ENCODE measurements at regions of chr3 and their contacts with region 1.

Region 1: DNA sequence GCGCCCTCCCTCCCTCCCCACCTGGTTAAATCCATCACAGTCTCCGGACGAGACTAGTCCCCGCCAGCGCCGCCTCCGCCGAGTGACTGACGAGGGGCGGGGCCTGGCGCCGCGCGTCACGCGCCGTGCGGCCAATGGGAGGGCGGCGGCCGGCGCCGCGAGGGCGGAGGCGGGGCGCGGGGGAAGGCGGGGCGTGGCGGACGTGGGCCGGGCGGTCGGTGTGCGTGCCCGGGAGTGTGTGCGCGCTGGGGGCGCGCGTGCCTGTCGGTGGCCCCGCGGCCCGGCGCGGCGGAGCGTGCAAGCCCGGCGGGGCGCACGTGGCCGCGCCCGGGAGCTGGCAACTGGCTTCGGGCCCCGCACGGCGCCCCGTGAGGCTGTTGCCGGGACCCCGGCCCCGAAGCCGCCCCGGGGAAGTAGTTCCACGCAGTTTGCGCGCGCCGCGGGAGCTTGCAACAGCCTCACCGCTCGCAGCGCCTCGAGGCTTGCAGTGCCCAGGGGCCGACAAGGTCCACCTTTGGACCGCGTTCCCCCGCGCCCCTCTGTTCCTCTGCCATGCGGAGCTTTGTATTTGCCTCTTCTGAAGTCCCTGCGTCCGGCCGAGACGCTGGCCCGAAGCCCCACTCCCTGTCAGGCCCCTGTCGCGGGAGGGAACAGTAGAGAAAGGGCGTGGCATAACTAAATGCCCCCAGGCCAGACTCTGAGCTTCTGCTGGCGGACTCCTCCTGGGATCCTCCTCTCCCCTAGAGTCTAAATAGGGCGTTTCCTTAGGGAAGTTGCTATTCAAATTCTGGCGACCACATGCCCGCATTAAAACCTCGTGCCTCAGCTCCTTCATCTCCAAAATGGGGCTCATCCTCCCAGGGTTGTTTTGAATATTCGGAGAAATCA is 400.9 kb downstream of the SHQ1 start:
- DNase-seq: peak; percentile 86 to 98 (median 95)
- ATAC-seq: peak; percentile 99
- H3K4me3 ChIP-seq: peak overlapping the region; percentile 39
- H3K4me3 Mint-ChIP-seq: peak overlapping the region; percentile 47 to 98 (median 74)
- H3K27ac ChIP-seq: peak overlapping the region; percentile 79
- H3K27ac Mint-ChIP-seq: peak overlapping the region; percentile 25 to 83 (median 61)
- H3K4me1 ChIP-seq: peaks cover 23 to 31% of the 10 kb centered on the region in 2 donors
- H3K4me1 Mint-ChIP-seq: peaks cover 37 to 43% (median 41%) of the 10 kb centered on the region in 7 donors
- H3K27me3 ChIP-seq: no peaks in the 10 kb centered on the region
- H3K27me3 Mint-ChIP-seq: peaks cover 0 to 8% (median 6%) of the 10 kb centered on the region in 5 donors

Region 2: DNA sequence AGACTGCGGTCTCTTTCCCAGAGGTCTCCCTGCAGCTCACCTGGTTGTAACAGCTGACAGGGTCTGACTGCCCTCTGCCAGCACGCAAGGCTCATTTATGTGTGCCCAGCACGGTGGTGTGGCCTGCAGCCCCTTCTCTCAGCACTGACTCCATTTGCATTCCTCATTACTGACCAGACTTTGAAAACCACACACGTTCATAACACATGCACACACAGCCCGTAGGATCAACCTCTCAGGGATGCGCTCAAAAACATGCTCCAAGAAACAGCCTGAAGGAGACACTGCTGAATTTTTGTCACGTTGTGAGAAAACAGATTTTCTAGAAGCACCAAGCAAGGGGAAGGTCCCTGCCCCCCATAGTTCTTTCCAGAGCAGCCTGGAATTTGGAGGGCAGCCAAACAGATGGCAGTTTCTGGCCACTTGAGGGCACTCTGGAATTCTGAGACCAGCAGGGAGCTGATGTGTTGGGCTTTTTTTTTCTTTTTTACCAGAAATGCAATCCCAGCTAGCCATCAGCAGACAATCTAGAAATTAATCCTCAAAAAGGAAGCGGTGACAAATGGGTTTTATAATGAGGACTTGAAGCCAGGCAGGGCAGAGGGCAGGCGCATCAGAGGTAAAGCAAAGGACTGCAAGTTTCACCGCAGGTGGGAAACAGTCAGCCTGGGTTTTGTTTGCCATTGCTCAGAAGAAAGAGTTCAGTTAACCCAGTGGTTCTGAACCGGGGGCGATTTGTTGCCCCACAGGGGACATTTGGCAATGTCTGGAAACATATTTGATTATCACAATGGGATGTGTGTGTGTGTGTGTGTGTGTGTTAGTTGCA is 491.8 kb before region 1 on chr3:
- CTCF ChIA-PET with region 1: no interaction called
- POLR2A ChIA-PET with region 1: no interaction called
- intact Hi-C with region 1: loop called in 1 of 2 experiments (anchors 10 kb)
- DNase-seq: peak in 3 of 9 donors; percentile 5 to 27 (median 17)
- ATAC-seq: no peak
- H3K4me3 ChIP-seq: no peak overlapping the region
- H3K4me3 Mint-ChIP-seq: no peak overlapping the region
- H3K27ac ChIP-seq: no peak overlapping the region
- H3K27ac Mint-ChIP-seq: peak overlapping the region in 1 of 9 donors; percentile 28
- H3K4me1 ChIP-seq: no peaks in the 10 kb centered on the region
- H3K4me1 Mint-ChIP-seq: peaks cover 0 to 43% (median 13%) of the 10 kb centered on the region in 7 donors
- H3K27me3 ChIP-seq: no peaks in the 10 kb centered on the region
- H3K27me3 Mint-ChIP-seq: no peaks in the 10 kb centered on the region

Region 3: GRCh38 chr3:72339116-72340030 is 107.9 kb before region 1 on chr3:
- CTCF ChIA-PET with region 1: no interaction called
- POLR2A ChIA-PET with region 1: interaction called, 3 read pairs
- intact Hi-C with region 1: loop called in 1 of 2 experiments (anchors 2 kb)
- DNase-seq: no peak
- ATAC-seq: peak; percentile 76
- H3K4me3 ChIP-seq: no peak overlapping the region
- H3K4me3 Mint-ChIP-seq: no peak overlapping the region
- H3K27ac ChIP-seq: no peak overlapping the region
- H3K27ac Mint-ChIP-seq: no peak overlapping the region
- H3K4me1 ChIP-seq: peaks cover 0 to 16% of the 10 kb centered on the region in 2 donors
- H3K4me1 Mint-ChIP-seq: peaks cover 9 to 29% (median 25%) of the 10 kb centered on the region in 7 donors
- H3K27me3 ChIP-seq: no peaks in the 10 kb centered on the region
- H3K27me3 Mint-ChIP-seq: peaks cover 0 to 3% (median 0%) of the 10 kb centered on the region in 5 donors

Region 4: DNA sequence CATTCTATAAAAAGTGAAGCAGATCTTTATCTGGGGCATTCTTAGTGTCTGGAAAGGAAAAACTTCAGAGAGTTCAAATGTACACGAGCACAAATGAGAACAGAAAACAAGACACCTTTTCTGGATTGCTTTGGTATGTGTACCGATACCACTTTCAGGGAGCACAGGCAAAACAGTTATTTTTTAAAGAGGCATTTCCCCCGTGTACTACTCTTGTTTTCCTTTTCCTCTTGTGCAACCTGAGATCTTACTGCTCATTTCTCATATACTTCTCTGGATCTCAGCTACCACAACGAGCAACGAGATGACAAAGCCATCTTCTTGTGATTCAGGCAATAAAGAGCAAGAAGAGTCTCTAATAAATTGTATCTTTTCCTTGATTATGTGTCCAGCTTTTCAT is 62.7 kb before region 1 on chr3:
- CTCF ChIA-PET with region 1: no interaction called
- POLR2A ChIA-PET with region 1: no interaction called
- intact Hi-C with region 1: loop called (anchors 2 kb)
- DNase-seq: no peak
- ATAC-seq: no peak
- H3K4me3 ChIP-seq: no peak overlapping the region
- H3K4me3 Mint-ChIP-seq: peak overlapping the region in 5 of 10 donors; percentile 5 to 53 (median 38)
- H3K27ac ChIP-seq: no peak overlapping the region
- H3K27ac Mint-ChIP-seq: peak overlapping the region in 7 of 9 donors; percentile 18 to 76 (median 51)
- H3K4me1 ChIP-seq: peaks cover 0 to 30% of the 10 kb centered on the region in 2 donors
- H3K4me1 Mint-ChIP-seq: peaks cover 54 to 100% (median 77%) of the 10 kb centered on the region in 7 donors
- H3K27me3 ChIP-seq: no peaks in the 10 kb centered on the region
- H3K27me3 Mint-ChIP-seq: no peaks in the 10 kb centered on the region

Region 5: GRCh38 chr3:72482589-72483321 is 35.5 kb after region 1 on chr3:
- CTCF ChIA-PET with region 1: no interaction called
- POLR2A ChIA-PET with region 1: no interaction called
- intact Hi-C with region 1: loop called (anchors 2 to 5 kb)
- DNase-seq: peak in 7 of 9 donors; percentile 9 to 72 (median 21)
- ATAC-seq: peak; percentile 85
- H3K4me3 ChIP-seq: peak overlapping the region; percentile 48
- H3K4me3 Mint-ChIP-seq: peak overlapping the region; percentile 62 to 91 (median 83)
- H3K27ac ChIP-seq: peak overlapping the region; percentile 46
- H3K27ac Mint-ChIP-seq: peak overlapping the region; percentile 26 to 85 (median 77)
- H3K4me1 ChIP-seq: no peaks in the 10 kb centered on the region
- H3K4me1 Mint-ChIP-seq: peaks cover 6 to 44% (median 12%) of the 10 kb centered on the region in 7 donors
- H3K27me3 ChIP-seq: no peaks in the 10 kb centered on the region
- H3K27me3 Mint-ChIP-seq: no peaks in the 10 kb centered on the region

Region 6: GRCh38 chr3:72549761-72550581 is 102.7 kb after region 1 on chr3:
- CTCF ChIA-PET with region 1: no interaction called
- POLR2A ChIA-PET with region 1: no interaction called
- intact Hi-C with region 1: no loop called
- DNase-seq: peak in 8 of 9 donors; percentile 4 to 40 (median 28)
- ATAC-seq: peak; percentile 47
- H3K4me3 ChIP-seq: peak overlapping the region; percentile 29
- H3K4me3 Mint-ChIP-seq: peak overlapping the region; percentile 78 to 90 (median 86)
- H3K27ac ChIP-seq: peak overlapping the region; percentile 51
- H3K27ac Mint-ChIP-seq: peak overlapping the region; percentile 86 to 97 (median 92)
- H3K4me1 ChIP-seq: peaks cover 4% of the 10 kb centered on the region in 2 donors
- H3K4me1 Mint-ChIP-seq: peaks cover 18 to 28% (median 25%) of the 10 kb centered on the region in 7 donors
- H3K27me3 ChIP-seq: no peaks in the 10 kb centered on the region
- H3K27me3 Mint-ChIP-seq: no peaks in the 10 kb centered on the region

Region 7: DNA sequence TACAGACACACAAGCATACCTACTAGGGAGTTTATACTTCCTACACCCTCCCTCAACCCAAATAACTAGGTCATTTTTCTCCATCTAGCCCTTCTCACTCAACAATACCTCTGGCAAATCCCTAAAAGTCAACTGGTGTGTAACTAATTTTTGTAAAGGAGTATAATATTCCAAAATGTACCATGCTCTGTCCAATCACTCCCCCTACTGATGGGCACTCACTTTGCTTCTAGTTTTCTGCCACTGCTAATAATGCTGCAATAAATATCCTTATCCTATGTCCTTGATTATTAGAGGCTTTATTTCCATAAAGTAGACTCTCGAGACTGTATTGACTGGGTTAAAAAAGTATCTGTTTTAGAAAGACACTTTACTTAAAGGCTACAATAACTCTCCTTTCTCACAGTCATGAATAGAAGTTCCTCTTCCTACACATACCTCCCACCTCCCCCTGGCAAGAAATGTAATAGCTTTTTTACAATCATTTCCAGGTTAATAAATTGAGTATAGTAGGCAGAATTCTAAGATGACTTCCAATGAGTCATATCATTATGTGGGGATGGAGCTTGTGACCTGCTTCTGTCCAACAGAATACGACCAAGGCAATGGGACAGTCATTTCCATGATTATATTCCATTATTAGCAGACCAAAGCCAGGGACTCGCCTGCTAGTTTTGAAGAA is 370.9 kb after region 1 on chr3:
- CTCF ChIA-PET with region 1: interaction called, 3 read pairs
- POLR2A ChIA-PET with region 1: interaction called, 4 read pairs
- intact Hi-C with region 1: loop called (anchors 1 to 2 kb)
- DNase-seq: peak in 1 of 9 donors; percentile 4
- ATAC-seq: no peak
- H3K4me3 ChIP-seq: no peak overlapping the region
- H3K4me3 Mint-ChIP-seq: no peak overlapping the region
- H3K27ac ChIP-seq: no peak overlapping the region
- H3K27ac Mint-ChIP-seq: peak overlapping the region in 2 of 9 donors; percentile 14 to 56
- H3K4me1 ChIP-seq: peaks cover 0 to 25% of the 10 kb centered on the region in 2 donors
- H3K4me1 Mint-ChIP-seq: peaks cover 0 to 14% (median 8%) of the 10 kb centered on the region in 7 donors
- H3K27me3 ChIP-seq: no peaks in the 10 kb centered on the region
- H3K27me3 Mint-ChIP-seq: no peaks in the 10 kb centered on the region